Naive thymus-derived CD4-positive, alpha-beta T cell (primary cell): ENCODE measurements at regions of chr7 and their contacts with region 1.

Region 1: DNA sequence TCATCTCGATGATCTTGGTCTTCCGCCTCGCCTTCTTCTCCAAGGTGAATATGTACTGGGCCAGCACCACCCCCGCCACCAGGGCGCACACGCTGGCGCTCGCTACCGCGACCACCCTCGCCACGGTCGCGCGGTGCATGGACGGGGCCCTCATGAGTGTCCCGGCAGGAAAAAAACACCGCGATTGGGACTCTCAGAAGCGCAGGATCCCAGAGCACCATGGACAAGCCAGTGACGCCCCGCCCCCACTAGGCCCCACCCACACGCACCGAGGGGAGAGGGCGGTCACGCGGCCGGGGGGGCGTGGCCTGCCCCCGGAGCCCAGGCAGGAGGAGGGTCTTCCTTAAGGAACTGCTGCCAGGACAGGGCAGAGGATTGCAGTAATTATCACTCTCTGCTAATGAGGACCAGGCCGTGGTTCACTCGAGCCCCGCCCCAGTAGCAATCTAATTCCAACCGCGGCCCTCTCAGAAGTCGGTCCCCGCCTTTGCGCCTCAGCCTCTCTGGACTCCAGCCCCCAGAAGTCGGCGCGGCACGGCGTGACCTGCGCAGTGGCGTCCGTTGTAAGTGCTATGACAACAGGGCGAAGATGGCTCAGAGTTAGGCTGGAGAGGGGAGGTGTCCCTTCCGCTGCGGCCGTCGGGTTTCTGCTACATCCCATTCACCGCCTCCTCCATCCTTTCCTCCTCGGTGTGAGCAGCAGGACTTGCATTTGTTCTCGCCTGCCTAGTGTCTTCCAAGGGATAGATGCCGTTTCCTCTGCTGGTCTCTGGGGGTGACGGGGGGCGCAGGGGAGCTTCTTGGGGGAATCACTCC is at the start of gene BBS9:
- DNase-seq: peak; percentile 83 to 90 (median 88)
- ATAC-seq: peak; percentile 97
- H3K4me3 ChIP-seq: peak within 1 kb of the TSS; percentile 80
- H3K4me3 Mint-ChIP-seq: peak within 1 kb of the TSS; percentile 94 to 99 (median 97)
- H3K27ac ChIP-seq: peak within 1 kb of the TSS; percentile 78
- H3K27ac Mint-ChIP-seq: peak within 1 kb of the TSS; percentile 84 to 97 (median 91)
- H3K4me1 ChIP-seq: peaks cover 6 to 9% of the 10 kb centered on the region in 2 donors
- H3K4me1 Mint-ChIP-seq: peaks cover 13 to 36% (median 25%) of the 10 kb centered on the region in 7 donors
- H3K27me3 ChIP-seq: no peaks in the 10 kb centered on the region
- H3K27me3 Mint-ChIP-seq: peaks cover 0 to 18% (median 0%) of the 10 kb centered on the region in 5 donors
- total RNA-seq, gene BBS9: 11.7 to 31.0 (median 28.3) TPM

Region 2: DNA sequence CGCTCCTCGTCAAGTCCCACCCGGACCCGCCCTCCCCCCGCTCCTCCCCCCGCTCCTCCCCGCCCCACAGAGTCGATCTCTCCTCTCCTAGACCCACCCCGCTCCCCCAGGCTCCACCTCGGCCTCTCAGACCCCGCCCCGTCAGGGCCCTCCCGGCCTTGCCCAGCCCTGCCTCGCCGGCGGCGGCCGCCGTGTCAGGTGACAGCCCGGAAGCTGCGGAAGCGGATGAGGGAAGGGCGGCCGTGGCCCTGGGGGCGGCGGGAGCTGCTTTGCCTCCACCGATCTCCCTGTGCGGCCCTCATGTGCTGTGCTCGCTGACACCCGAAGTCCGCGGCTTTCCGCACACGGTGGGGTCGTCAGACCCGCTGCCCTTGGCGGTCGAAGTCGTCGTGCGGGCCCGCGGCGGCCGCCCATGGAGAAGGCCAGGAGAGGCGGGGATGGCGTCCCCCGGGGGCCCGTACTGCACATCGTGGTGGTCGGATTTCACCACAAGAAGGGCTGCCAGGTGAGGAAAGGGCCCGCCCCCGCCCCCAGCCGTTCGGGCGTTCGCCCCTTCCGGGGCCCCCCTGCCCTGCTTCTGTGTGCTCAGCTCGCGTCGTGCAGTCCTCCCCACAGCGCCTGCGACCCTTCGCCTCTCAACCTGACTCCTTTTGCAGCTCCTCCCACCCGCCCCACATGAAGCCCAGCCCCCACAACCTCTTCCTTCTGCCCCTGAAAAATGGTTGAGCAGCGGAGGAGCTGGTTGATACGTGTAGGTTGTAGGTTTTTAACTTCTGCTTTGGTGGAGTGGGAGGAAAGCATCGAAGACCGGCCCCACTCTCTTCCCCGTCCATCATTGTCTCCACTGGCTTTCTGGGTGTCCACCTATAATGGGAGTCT is 633.7 kb before region 1 on chr7 and contains the start of gene AVL9:
- CTCF ChIA-PET with region 1: no interaction called
- POLR2A ChIA-PET with region 1: no interaction called
- intact Hi-C with region 1: loop called (anchors 1 kb)
- DNase-seq: peak; percentile 96 to 99 (median 98)
- ATAC-seq: peak; percentile 98
- H3K4me3 ChIP-seq: peak within 1 kb of the TSS; percentile 88
- H3K4me3 Mint-ChIP-seq: peak within 1 kb of the TSS; percentile 86 to 100 (median 96)
- H3K27ac ChIP-seq: peak within 1 kb of the TSS; percentile 96
- H3K27ac Mint-ChIP-seq: peak within 1 kb of the TSS; percentile 92 to 98 (median 97)
- H3K4me1 ChIP-seq: peaks cover 12 to 25% of the 10 kb centered on the region in 2 donors
- H3K4me1 Mint-ChIP-seq: peaks cover 22 to 50% (median 40%) of the 10 kb centered on the region in 7 donors
- H3K27me3 ChIP-seq: no peaks in the 10 kb centered on the region
- H3K27me3 Mint-ChIP-seq: no peaks in the 10 kb centered on the region
- total RNA-seq, gene AVL9: 30.9 to 57.9 (median 45.3) TPM

Region 3: DNA sequence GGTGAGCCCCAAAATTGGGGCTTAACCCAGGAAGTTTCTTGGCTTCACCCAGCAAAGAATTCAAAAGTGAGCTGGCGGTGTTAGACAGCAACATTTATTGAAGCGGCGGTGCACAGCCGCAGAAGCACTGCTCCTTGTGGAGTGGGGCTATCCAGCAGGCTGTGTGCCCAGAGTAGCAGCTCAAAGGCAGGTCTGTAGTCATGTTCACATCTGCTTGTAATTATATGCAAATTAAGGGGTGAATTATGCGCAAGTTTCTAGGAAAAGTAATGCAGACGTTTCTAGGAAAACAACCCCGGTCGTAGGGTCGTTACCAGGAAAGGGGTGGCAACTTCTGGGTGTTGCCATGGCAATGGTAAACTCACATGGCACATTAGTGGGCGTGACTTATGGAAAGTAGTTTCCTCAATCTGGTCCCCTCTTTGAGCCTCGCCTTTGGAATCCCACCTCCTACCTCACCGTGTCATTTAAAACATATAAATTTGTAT is 224.0 kb before region 1 on chr7:
- CTCF ChIA-PET with region 1: no interaction called
- POLR2A ChIA-PET with region 1: no interaction called
- intact Hi-C with region 1: loop called in 1 of 2 experiments (anchors 1 kb)
- DNase-seq: peak; percentile 37 to 88 (median 82)
- ATAC-seq: peak; percentile 92
- H3K4me3 ChIP-seq: peak overlapping the region; percentile 63
- H3K4me3 Mint-ChIP-seq: peak overlapping the region; percentile 73 to 89 (median 85)
- H3K27ac ChIP-seq: peak overlapping the region; percentile 84
- H3K27ac Mint-ChIP-seq: peak overlapping the region; percentile 86 to 96 (median 94)
- H3K4me1 ChIP-seq: peaks cover 6 to 16% of the 10 kb centered on the region in 2 donors
- H3K4me1 Mint-ChIP-seq: peaks cover 4 to 27% (median 24%) of the 10 kb centered on the region in 7 donors
- H3K27me3 ChIP-seq: no peaks in the 10 kb centered on the region
- H3K27me3 Mint-ChIP-seq: no peaks in the 10 kb centered on the region

Region 4: GRCh38 chr7:33050535-33051318 is 78.5 kb before region 1 on chr7:
- CTCF ChIA-PET with region 1: no interaction called
- POLR2A ChIA-PET with region 1: interaction called, 3 read pairs
- intact Hi-C with region 1: loop called in 1 of 2 experiments (anchors 2 kb)
- DNase-seq: peak in 7 of 9 donors; percentile 31 to 65 (median 56)
- ATAC-seq: peak; percentile 81
- H3K4me3 ChIP-seq: no peak overlapping the region
- H3K4me3 Mint-ChIP-seq: peak overlapping the region in 3 of 10 donors; percentile 7 to 53 (median 23)
- H3K27ac ChIP-seq: no peak overlapping the region
- H3K27ac Mint-ChIP-seq: peak overlapping the region in 8 of 9 donors; percentile 2 to 79 (median 32)
- H3K4me1 ChIP-seq: peaks cover 13 to 18% of the 10 kb centered on the region in 2 donors
- H3K4me1 Mint-ChIP-seq: peaks cover 27 to 83% (median 69%) of the 10 kb centered on the region in 7 donors
- H3K27me3 ChIP-seq: no peaks in the 10 kb centered on the region
- H3K27me3 Mint-ChIP-seq: no peaks in the 10 kb centered on the region